Sciatic nerve (tissue), 2 donors: ENCODE measurements at regions of chr20 and their contacts with region 1.

Region 1: GRCh38 chr20:19692685-19693119 is 65.4 kb upstream of the RIN2 start:
- DNase-seq: peak; percentile 78
- ATAC-seq: peak; percentile 30

Region 2: DNA sequence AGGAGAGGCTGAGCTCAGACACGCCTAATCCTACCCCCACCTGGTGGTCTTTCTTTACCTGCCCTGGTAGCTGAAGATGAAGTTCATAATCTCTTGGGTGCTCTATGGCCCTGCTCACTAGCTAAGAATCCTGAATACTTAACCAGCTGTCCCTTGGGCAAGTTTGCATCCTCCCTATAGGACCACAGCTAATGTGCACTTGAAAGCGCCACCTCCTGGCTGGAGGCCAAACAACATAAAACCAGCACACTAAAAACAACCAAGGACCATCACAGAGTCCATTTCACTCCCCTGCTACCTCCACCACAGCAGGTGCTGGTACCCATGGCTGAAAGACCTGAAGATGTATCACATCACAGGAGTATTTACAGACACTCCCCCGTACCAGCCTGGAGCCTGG is 635.8 kb before region 1 on chr20:
- intact Hi-C with region 1: no loop called
- DNase-seq: no peak
- ATAC-seq: no peak

Region 3: DNA sequence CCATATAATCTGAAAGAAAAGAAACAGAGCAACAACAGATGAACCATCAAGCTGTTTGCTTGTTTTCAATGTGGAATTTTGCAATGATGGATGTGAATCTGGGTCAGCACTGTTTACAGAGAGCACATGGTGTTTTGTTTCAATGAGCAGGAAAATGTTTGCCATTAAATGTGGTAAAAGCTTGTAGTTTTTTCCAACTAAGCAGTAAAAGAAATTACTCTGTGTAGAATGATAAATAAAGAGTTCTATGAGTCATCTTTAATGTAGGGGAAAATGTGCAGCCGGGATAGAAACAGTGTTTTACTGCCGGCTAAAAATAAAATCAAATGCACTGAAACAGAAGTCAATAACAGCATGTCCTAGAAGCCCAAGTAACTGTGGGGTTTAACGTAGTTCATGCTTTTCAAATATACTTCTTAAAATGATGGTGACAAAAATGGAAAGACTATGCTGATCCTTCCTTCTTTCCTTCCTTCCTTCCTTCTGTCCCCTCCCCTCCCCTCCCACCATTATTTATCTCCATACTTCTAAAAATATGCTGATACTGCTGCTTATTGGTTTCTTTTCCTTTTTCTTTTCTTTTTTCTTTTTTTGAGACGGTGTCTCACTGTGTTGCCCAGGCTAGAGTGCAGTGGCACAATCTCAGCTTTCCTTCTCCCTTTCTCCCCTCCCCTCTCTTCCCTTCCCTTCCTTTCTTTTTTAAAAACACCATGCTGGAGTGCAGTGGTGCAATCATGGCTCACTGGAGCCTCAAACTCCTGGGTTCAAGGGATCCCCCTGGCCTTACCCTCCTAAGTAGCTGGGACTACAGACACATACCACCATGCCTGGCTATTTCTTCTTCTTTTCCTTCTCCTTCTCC is 318.2 kb after region 1 on chr20:
- intact Hi-C with region 1: loop called (anchors 5 kb)
- DNase-seq: no peak
- ATAC-seq: peak; percentile 70